Psoas muscle (tissue), 8 donors: ENCODE measurements at regions of chr16 and their contacts with region 1.

Region 1: GRCh38 chr16:67928561-67929364 is 2.9 kb downstream of the CTRL start:
- DNase-seq: peak; percentile 75 to 89
- ATAC-seq: peak; percentile 64 to 79 (median 72)
- H3K4me3 ChIP-seq: no peak overlapping the region
- H3K27ac ChIP-seq: no peak overlapping the region
- H3K4me1 ChIP-seq: peaks cover 36% of the 10 kb centered on the region
- H3K27me3 ChIP-seq: no peaks in the 10 kb centered on the region
- CTCF ChIP-seq: peak; percentile 84

Region 2: GRCh38 chr16:67816240-67817031 is 112.3 kb before region 1 on chr16:
- intact Hi-C with region 1: loop called (anchors 1 to 2 kb)
- DNase-seq: peak; percentile 85 to 93
- ATAC-seq: peak; percentile 97 to 100 (median 98)
- H3K4me3 ChIP-seq: no peak overlapping the region
- H3K27ac ChIP-seq: peak overlapping the region; percentile 62
- H3K4me1 ChIP-seq: peaks cover 3% of the 10 kb centered on the region
- H3K27me3 ChIP-seq: no peaks in the 10 kb centered on the region
- CTCF ChIP-seq: peak; percentile 100

Region 3: GRCh38 chr16:67883872-67884261 is 44.9 kb before region 1 on chr16:
- intact Hi-C with region 1: loop called (anchors 2 kb)
- DNase-seq: peak; percentile 64 to 80
- ATAC-seq: peak in 3 of 4 donors; percentile 21 to 48 (median 25)
- H3K4me3 ChIP-seq: no peak overlapping the region
- H3K27ac ChIP-seq: peak overlapping the region; percentile 93
- H3K4me1 ChIP-seq: peaks cover 61% of the 10 kb centered on the region
- H3K27me3 ChIP-seq: no peaks in the 10 kb centered on the region
- CTCF ChIP-seq: peak; percentile 81